ENCODE measurements at regions of chr6 and their contacts with region 1.

Region 1: DNA sequence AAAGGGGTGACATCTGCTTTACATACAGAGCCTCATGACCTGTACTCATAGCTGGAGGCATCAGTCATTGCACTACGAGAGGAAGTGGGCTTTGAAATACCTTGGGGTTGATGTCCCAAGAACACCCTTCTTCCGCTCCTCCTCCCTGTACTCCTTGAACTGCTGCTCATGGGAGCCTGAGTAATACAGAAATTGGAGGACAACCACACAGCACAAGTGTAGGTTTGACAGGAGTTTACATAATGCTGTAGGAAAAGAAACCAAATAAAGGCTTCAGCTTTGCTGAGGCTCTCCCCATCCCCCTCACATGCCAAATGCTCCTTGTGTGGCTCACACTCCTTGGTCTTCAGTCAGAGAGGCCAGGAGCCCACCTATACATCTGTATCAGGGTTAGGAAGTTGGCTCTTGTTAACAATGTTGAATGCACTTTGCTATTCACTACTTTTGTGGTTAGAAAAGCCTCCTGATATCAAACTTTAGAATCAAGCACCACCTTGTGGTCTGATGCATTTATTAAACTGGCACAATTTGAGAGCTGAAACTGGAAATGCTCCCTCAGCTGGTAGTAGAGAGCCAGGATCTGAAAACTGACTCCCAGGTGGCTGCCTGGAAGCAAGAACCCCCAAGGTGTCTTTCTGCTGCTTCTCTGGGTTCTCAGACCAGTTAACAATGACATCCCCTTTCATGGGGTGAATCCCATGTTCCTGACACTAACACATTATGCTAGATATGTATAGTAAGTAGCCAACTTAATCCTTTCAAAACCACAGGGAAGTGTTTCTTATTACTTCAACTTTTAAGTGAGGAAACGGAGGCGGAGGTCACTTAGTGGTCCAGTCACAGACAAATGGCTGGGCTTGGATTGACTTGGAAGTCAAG is 56.2 kb upstream of the EDN1 start:
- DNase-seq: peak in 7 of 9 experiments; percentile 7 to 76 (median 34)
- ATAC-seq: peak; percentile 73
- H3K4me3 ChIP-seq: no peak overlapping the region
- H3K4me3 Mint-ChIP-seq: peak overlapping the region; percentile 6
- H3K27ac ChIP-seq: no peak overlapping the region
- H3K27ac Mint-ChIP-seq: no peak overlapping the region
- H3K4me1 ChIP-seq: peaks cover 14% of the 10 kb centered on the region
- H3K4me1 Mint-ChIP-seq: peaks cover 21% of the 10 kb centered on the region
- H3K27me3 ChIP-seq: no peaks in the 10 kb centered on the region
- H3K27me3 Mint-ChIP-seq: no peaks in the 10 kb centered on the region
- CTCF ChIP-seq: peak; percentile 79

Region 2: GRCh38 chr6:11585426-11586016 is 648.4 kb before region 1 on chr6:
- CTCF ChIA-PET with region 1: no interaction called
- POLR2A ChIA-PET with region 1: no interaction called
- intact Hi-C with region 1: loop called (anchors 5 kb)
- DNase-seq: peak in 2 of 9 experiments; percentile 19 to 27
- ATAC-seq: no peak
- H3K4me3 ChIP-seq: no peak overlapping the region
- H3K4me3 Mint-ChIP-seq: no peak overlapping the region
- H3K27ac ChIP-seq: no peak overlapping the region
- H3K27ac Mint-ChIP-seq: no peak overlapping the region
- H3K4me1 ChIP-seq: no peaks in the 10 kb centered on the region
- H3K4me1 Mint-ChIP-seq: no peaks in the 10 kb centered on the region
- H3K27me3 ChIP-seq: no peaks in the 10 kb centered on the region
- H3K27me3 Mint-ChIP-seq: peaks cover 12% of the 10 kb centered on the region
- CTCF ChIP-seq: peak; percentile 22

Region 3: DNA sequence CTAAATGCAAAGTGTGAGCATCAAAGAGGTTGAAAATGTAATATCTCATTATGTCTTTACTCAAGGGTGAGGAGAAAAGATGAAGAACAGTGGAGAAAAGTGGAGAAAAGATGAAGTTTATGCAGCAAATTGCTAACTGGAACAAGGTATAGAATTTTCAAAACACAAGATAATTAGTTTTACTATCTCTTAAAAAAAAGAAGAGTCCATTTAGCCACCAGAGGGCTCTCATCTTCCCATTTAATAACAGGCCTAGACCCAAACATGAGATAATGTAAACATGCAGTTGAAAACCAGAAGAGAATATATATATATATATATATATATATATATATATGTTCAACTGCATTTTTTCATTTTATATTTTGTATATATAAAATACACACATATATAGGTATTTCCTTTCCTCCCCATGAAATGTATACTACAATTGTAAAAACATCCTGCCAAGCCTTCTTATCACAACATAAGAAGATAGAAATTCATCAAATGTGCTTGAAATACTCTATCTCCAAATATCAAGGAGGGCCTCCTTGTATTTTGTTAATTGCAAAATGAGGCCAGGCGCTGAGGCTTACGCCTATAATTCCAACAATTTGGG is 533.7 kb before region 1 on chr6:
- CTCF ChIA-PET with region 1: interaction called, 7 read pairs
- POLR2A ChIA-PET with region 1: no interaction called
- intact Hi-C with region 1: loop called (anchors 1 to 2 kb)
- DNase-seq: peak in 2 of 9 experiments; percentile 49 to 64
- ATAC-seq: no peak
- H3K4me3 ChIP-seq: no peak overlapping the region
- H3K4me3 Mint-ChIP-seq: no peak overlapping the region
- H3K27ac ChIP-seq: no peak overlapping the region
- H3K27ac Mint-ChIP-seq: no peak overlapping the region
- H3K4me1 ChIP-seq: no peaks in the 10 kb centered on the region
- H3K4me1 Mint-ChIP-seq: peaks cover 12% of the 10 kb centered on the region
- H3K27me3 ChIP-seq: peaks cover 0 to 2% of the 10 kb centered on the region in 2 experiments
- H3K27me3 Mint-ChIP-seq: no peaks in the 10 kb centered on the region
- CTCF ChIP-seq: peak; percentile 49

Region 4: DNA sequence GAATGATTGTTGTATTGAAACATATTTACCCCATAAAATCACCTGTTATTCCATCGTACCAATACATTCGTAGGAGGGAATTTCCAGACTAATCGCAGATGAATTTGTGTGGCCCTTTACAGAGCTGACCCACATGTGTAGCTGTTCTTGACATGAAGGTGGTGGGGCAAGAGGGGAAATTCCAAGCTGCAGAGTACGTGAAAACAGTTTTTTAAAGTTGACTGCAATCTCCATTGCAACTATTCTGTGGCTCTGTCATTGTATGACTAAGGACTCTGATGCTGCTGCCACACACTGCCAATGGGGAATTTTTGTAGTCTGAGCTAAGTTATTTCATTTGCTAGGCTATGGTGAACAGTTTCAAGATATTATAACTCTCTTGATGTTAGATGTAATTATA is 408.9 kb before region 1 on chr6:
- CTCF ChIA-PET with region 1: interaction called, 4 read pairs
- POLR2A ChIA-PET with region 1: no interaction called
- intact Hi-C with region 1: loop called (anchors 2 to 5 kb)
- DNase-seq: peak in 1 of 9 experiments; percentile 27
- ATAC-seq: no peak
- H3K4me3 ChIP-seq: no peak overlapping the region
- H3K4me3 Mint-ChIP-seq: no peak overlapping the region
- H3K27ac ChIP-seq: no peak overlapping the region
- H3K27ac Mint-ChIP-seq: no peak overlapping the region
- H3K4me1 ChIP-seq: no peaks in the 10 kb centered on the region
- H3K4me1 Mint-ChIP-seq: peaks cover 3% of the 10 kb centered on the region
- H3K27me3 ChIP-seq: no peaks in the 10 kb centered on the region
- H3K27me3 Mint-ChIP-seq: peaks cover 2% of the 10 kb centered on the region
- CTCF ChIP-seq: no peak

Region 5: GRCh38 chr6:11885159-11885558 is 348.8 kb before region 1 on chr6:
- CTCF ChIA-PET with region 1: no interaction called
- POLR2A ChIA-PET with region 1: no interaction called
- intact Hi-C with region 1: no loop called
- DNase-seq: no peak
- ATAC-seq: no peak
- H3K4me3 ChIP-seq: no peak overlapping the region
- H3K4me3 Mint-ChIP-seq: no peak overlapping the region
- H3K27ac ChIP-seq: no peak overlapping the region
- H3K27ac Mint-ChIP-seq: no peak overlapping the region
- H3K4me1 ChIP-seq: no peaks in the 10 kb centered on the region
- H3K4me1 Mint-ChIP-seq: no peaks in the 10 kb centered on the region
- H3K27me3 ChIP-seq: no peaks in the 10 kb centered on the region
- H3K27me3 Mint-ChIP-seq: no peaks in the 10 kb centered on the region
- CTCF ChIP-seq: no peak

Region 6: DNA sequence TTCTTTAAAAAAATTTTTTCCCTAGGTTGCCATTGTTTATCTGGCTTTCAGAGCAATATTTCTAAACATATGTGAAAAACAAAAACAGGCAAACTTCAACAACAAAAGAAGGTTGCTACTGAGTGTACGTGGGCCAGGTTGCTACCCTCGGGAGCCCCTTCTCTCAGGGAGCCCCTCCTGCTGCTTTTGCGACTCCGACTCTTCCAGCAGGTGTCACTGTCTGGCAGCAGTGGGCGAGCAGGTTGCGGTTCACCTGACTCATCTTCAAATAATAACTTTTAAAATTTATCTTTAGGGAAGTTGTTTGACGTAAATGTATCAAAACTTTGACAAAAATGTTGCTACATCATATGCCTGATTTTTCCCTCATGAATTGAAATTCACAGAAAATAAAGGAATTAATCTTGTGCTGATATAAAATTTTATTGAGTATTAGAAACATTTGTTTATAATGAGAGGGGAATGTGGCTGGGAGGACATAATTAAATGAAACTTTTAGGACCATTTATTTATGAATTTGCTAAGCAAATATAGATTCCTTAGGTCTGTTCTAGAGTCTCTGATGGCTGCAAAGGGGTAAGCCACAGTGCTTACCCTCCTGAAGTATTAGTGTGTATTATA is 83.0 kb before region 1 on chr6:
- CTCF ChIA-PET with region 1: interaction called, 6 read pairs
- POLR2A ChIA-PET with region 1: no interaction called
- intact Hi-C with region 1: loop called (anchors 1 kb)
- DNase-seq: peak in 8 of 9 experiments; percentile 11 to 63 (median 50)
- ATAC-seq: peak; percentile 73
- H3K4me3 ChIP-seq: no peak overlapping the region
- H3K4me3 Mint-ChIP-seq: no peak overlapping the region
- H3K27ac ChIP-seq: no peak overlapping the region
- H3K27ac Mint-ChIP-seq: no peak overlapping the region
- H3K4me1 ChIP-seq: no peaks in the 10 kb centered on the region
- H3K4me1 Mint-ChIP-seq: no peaks in the 10 kb centered on the region
- H3K27me3 ChIP-seq: no peaks in the 10 kb centered on the region
- H3K27me3 Mint-ChIP-seq: no peaks in the 10 kb centered on the region
- CTCF ChIP-seq: peak; percentile 60

Region 7: DNA sequence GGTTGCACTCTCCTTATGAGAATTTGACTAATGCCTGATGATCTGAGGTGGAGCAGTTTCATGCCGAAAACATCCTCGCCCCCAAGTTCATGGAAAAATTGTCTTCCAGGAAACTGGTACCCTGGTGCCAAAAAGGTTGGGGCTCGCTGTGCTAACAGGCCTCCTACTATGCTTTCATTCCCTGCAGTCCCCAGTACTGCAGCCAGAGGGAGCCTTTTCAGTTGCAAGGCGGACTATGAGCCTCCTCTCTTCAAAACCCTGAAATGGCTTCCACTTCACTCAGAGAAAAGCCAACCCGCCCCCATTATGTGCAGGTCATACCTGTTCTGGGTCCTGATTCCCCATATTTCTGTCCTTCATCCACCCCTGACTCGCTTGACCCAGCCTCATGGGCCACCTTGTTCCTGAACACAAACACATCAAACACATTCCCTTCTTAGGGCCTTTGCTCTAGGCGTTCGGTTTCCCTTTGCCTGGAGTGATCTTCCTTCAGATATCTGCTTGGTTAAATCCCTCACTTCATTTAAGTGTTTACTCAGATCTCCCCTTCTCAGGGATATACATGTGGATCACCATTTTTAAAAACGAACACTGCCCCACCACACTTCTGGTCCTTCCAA is 656.3 kb after region 1 on chr6:
- CTCF ChIA-PET with region 1: no interaction called
- POLR2A ChIA-PET with region 1: no interaction called
- intact Hi-C with region 1: loop called in 1 of 2 experiments (anchors 5 kb)
- DNase-seq: peak in 2 of 9 experiments; percentile 12 to 14
- ATAC-seq: no peak
- H3K4me3 ChIP-seq: no peak overlapping the region
- H3K4me3 Mint-ChIP-seq: no peak overlapping the region
- H3K27ac ChIP-seq: no peak overlapping the region
- H3K27ac Mint-ChIP-seq: no peak overlapping the region
- H3K4me1 ChIP-seq: no peaks in the 10 kb centered on the region
- H3K4me1 Mint-ChIP-seq: peaks cover 3% of the 10 kb centered on the region
- H3K27me3 ChIP-seq: no peaks in the 10 kb centered on the region
- H3K27me3 Mint-ChIP-seq: peaks cover 11% of the 10 kb centered on the region
- CTCF ChIP-seq: peak; percentile 14

Measured in CD8-positive, alpha-beta T cell (primary cell).